ENCODE measurements at regions of chr6 and their contacts with region 1.

Region 1: GRCh38 chr6:139219271-139219729 is 72.5 kb downstream of the TXLNB start:
- DNase-seq: peak; percentile 54 to 70 (median 68)
- H3K4me3 ChIP-seq: no peak overlapping the region
- H3K4me3 Mint-ChIP-seq: peak overlapping the region in 6 of 8 donors; percentile 23 to 80 (median 74)
- H3K27ac ChIP-seq: no peak overlapping the region
- H3K27ac Mint-ChIP-seq: peak overlapping the region; percentile 33 to 94 (median 87)
- H3K4me1 ChIP-seq: peaks cover 14% of the 10 kb centered on the region
- H3K4me1 Mint-ChIP-seq: peaks cover 8 to 13% (median 11%) of the 10 kb centered on the region in 4 donors
- H3K27me3 ChIP-seq: no peaks in the 10 kb centered on the region
- H3K27me3 Mint-ChIP-seq: no peaks in the 10 kb centered on the region

Region 2: DNA sequence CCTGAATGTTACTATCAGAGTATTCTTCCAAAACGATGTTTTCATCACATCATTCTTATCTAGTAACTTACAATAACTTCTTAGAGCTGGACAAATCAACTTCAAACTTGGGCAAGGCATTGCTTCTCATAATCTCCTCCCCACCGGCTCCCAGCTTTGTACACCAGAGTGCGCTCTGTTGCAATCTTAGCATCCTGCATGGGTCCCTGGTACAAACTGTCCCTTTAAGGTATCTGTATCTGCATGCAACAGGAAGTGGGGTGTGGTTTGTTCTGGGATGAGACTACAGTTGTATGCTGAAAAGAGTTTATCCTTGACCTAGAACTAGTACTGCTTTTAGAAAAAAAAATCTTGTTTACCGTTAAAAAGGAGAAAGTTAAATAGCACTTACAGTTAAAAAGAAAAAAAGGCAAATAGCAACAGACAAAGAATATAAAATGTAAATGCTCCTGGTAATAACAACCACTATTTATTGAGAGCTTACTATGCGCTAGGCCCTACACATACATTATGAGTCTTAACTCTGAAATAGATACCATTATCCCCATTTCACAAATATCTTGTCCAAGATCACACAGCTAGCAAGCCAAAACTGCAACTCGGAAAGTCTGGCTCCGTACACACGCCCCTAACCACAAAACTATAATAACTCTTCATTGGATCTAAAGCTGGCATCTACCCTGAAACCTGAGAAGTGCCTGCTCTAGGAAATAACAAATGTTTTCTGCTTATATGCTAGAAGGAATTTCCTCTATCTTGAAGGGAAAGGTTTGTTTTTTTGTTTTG is 94.2 kb before region 1 on chr6:
- CTCF ChIA-PET with region 1: interaction called, 37 read pairs
- POLR2A ChIA-PET with region 1: interaction called, 32 read pairs
- intact Hi-C with region 1: loop called (anchors 1 kb)
- DNase-seq: peak; percentile 85 to 88 (median 86)
- H3K4me3 ChIP-seq: peak overlapping the region in 1 of 2 donors; percentile 34
- H3K4me3 Mint-ChIP-seq: peak overlapping the region; percentile 57 to 80 (median 71)
- H3K27ac ChIP-seq: peak overlapping the region; percentile 55
- H3K27ac Mint-ChIP-seq: peak overlapping the region; percentile 79 to 98 (median 94)
- H3K4me1 ChIP-seq: peaks cover 55% of the 10 kb centered on the region
- H3K4me1 Mint-ChIP-seq: peaks cover 43 to 63% (median 51%) of the 10 kb centered on the region in 4 donors
- H3K27me3 ChIP-seq: no peaks in the 10 kb centered on the region
- H3K27me3 Mint-ChIP-seq: no peaks in the 10 kb centered on the region

Region 3: DNA sequence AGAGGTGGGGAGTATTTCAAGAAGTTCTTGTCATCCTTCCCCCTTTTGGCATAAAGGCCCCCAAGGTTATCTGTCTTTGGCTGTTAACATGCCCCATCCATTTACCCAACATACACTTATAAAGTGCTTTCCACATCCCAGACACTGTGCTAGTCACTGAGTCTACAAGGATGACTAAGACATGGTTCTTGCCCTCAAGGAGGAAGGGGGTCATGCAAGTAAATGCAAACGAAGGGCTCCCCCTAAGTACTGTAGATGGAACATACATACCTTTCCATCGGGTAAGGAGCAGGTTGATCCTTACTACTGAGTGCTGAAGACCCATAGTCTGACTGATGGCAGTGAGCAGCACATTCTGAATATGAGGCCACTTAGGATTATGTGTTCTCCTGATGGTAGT is 46.1 kb before region 1 on chr6:
- CTCF ChIA-PET with region 1: interaction called, 14 read pairs
- POLR2A ChIA-PET with region 1: interaction called, 4 read pairs
- intact Hi-C with region 1: no loop called
- DNase-seq: peak in 3 of 5 donors; percentile 24 to 61 (median 25)
- H3K4me3 ChIP-seq: no peak overlapping the region
- H3K4me3 Mint-ChIP-seq: peak overlapping the region in 7 of 8 donors; percentile 20 to 69 (median 53)
- H3K27ac ChIP-seq: no peak overlapping the region
- H3K27ac Mint-ChIP-seq: peak overlapping the region; percentile 29 to 88 (median 77)
- H3K4me1 ChIP-seq: peaks cover 97% of the 10 kb centered on the region
- H3K4me1 Mint-ChIP-seq: peaks cover 81 to 93% (median 89%) of the 10 kb centered on the region in 4 donors
- H3K27me3 ChIP-seq: no peaks in the 10 kb centered on the region
- H3K27me3 Mint-ChIP-seq: no peaks in the 10 kb centered on the region

Region 4: GRCh38 chr6:139240161-139241010 is 21.1 kb after region 1 on chr6:
- CTCF ChIA-PET with region 1: interaction called, 11 read pairs
- POLR2A ChIA-PET with region 1: no interaction called
- intact Hi-C with region 1: no loop called
- DNase-seq: no peak
- H3K4me3 ChIP-seq: no peak overlapping the region
- H3K4me3 Mint-ChIP-seq: no peak overlapping the region
- H3K27ac ChIP-seq: no peak overlapping the region
- H3K27ac Mint-ChIP-seq: peak overlapping the region in 1 of 7 donors; percentile 1
- H3K4me1 ChIP-seq: no peaks in the 10 kb centered on the region
- H3K4me1 Mint-ChIP-seq: peaks cover 6 to 12% (median 9%) of the 10 kb centered on the region in 4 donors
- H3K27me3 ChIP-seq: no peaks in the 10 kb centered on the region
- H3K27me3 Mint-ChIP-seq: no peaks in the 10 kb centered on the region

Region 5: GRCh38 chr6:139262519-139263300 is 43.4 kb after region 1 on chr6:
- CTCF ChIA-PET with region 1: interaction called, 41 read pairs
- POLR2A ChIA-PET with region 1: interaction called, 9 read pairs
- intact Hi-C with region 1: no loop called
- DNase-seq: peak; percentile 53 to 62 (median 59)
- H3K4me3 ChIP-seq: peak overlapping the region in 1 of 2 donors; percentile 22
- H3K4me3 Mint-ChIP-seq: peak overlapping the region; percentile 74 to 86 (median 82)
- H3K27ac ChIP-seq: peak overlapping the region; percentile 44
- H3K27ac Mint-ChIP-seq: peak overlapping the region; percentile 59 to 96 (median 90)
- H3K4me1 ChIP-seq: peaks cover 39% of the 10 kb centered on the region
- H3K4me1 Mint-ChIP-seq: peaks cover 34 to 56% (median 39%) of the 10 kb centered on the region in 4 donors
- H3K27me3 ChIP-seq: no peaks in the 10 kb centered on the region
- H3K27me3 Mint-ChIP-seq: no peaks in the 10 kb centered on the region

Region 6: DNA sequence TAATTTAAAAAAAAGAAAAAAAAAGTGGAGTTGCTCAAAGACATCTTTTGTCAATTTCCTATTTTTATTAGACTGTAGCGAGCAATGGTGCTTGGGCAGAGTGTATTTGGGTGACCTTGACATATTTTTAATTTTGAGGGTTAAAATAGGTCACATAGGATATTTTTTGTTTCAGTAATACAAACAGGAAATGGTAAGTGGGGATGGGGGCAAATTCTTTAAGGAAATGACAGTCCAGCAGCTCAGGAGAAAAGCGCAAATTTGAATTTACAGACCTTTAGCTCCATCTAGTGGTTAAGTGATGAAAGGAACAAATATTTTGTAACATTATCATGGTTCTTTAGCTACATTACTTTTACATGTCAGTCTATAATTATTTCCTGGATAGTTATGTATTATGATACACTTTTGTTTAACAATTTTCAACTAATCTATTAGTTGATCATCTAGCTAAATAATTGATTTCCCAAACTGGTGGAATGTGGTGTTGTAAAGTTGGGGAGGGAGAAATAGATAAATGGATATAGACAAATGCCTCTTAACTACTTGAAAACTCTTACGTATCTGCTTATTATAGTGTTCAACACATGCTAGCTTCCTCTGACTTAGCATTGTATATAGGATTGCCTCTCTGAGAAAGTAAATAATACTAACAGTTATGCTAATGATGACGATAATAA is 145.1 kb after region 1 on chr6:
- CTCF ChIA-PET with region 1: interaction called, 238 read pairs
- POLR2A ChIA-PET with region 1: interaction called, 40 read pairs
- intact Hi-C with region 1: loop called (anchors 1 kb)
- DNase-seq: peak in 4 of 5 donors; percentile 66 to 74 (median 68)
- H3K4me3 ChIP-seq: no peak overlapping the region
- H3K4me3 Mint-ChIP-seq: peak overlapping the region in 7 of 8 donors; percentile 27 to 64 (median 36)
- H3K27ac ChIP-seq: no peak overlapping the region
- H3K27ac Mint-ChIP-seq: peak overlapping the region in 6 of 7 donors; percentile 2 to 82 (median 62)
- H3K4me1 ChIP-seq: peaks cover 20% of the 10 kb centered on the region
- H3K4me1 Mint-ChIP-seq: peaks cover 28 to 45% (median 33%) of the 10 kb centered on the region in 4 donors
- H3K27me3 ChIP-seq: no peaks in the 10 kb centered on the region
- H3K27me3 Mint-ChIP-seq: no peaks in the 10 kb centered on the region

Region 7: GRCh38 chr6:139429580-139430145 is 210.4 kb after region 1 on chr6:
- CTCF ChIA-PET with region 1: no interaction called
- POLR2A ChIA-PET with region 1: no interaction called
- intact Hi-C with region 1: no loop called
- DNase-seq: no peak
- H3K4me3 ChIP-seq: no peak overlapping the region
- H3K4me3 Mint-ChIP-seq: no peak overlapping the region
- H3K27ac ChIP-seq: no peak overlapping the region
- H3K27ac Mint-ChIP-seq: no peak overlapping the region
- H3K4me1 ChIP-seq: no peaks in the 10 kb centered on the region
- H3K4me1 Mint-ChIP-seq: peaks cover 0 to 1% (median 0%) of the 10 kb centered on the region in 4 donors
- H3K27me3 ChIP-seq: no peaks in the 10 kb centered on the region
- H3K27me3 Mint-ChIP-seq: peaks cover 3% of the 10 kb centered on the region in 2 donors

Measured in CD4-positive, alpha-beta memory T cell (primary cell).